BJ (cell line): ENCODE measurements at regions of chr22 and their contacts with region 1.

Region 1: DNA sequence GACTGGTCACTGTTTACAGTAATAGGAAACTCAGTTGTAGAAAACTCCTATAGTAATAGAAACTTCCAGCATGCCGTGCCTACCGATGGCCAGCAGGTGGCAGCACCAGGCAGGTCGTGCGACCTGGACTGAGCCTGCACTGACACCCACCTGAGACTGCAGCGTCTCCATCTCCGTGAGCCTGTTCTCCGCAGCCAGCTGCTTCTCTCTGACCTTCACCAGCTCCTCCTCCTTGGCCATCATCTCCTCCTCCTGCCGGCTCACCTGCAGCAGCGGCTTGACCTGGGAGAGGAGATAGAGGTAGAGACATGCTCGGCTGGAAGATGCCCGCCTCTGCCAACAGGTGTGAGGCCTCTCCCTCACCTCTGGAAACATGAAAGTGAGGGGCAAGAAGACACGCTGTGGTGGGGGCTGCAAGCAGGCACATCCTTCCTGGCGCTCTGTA is 48.5 kb downstream of the APOL1 start:
- DNase-seq: no peak
- H3K4me3 ChIP-seq: no peak overlapping the region
- H3K27me3 ChIP-seq: no peaks in the 10 kb centered on the region
- CTCF ChIP-seq: peak; percentile 90

Region 2: GRCh38 chr22:36277482-36278291 is 23.7 kb before region 1 on chr22:
- CTCF ChIA-PET with region 1: interaction called, 14 read pairs
- POLR2A ChIA-PET with region 1: no interaction called
- DNase-seq: no peak
- H3K4me3 ChIP-seq: no peak overlapping the region
- H3K27me3 ChIP-seq: no peaks in the 10 kb centered on the region
- CTCF ChIP-seq: peak; percentile 86

Region 3: GRCh38 chr22:36311386-36312358 is 10.3 kb after region 1 on chr22:
- CTCF ChIA-PET with region 1: interaction called, 23 read pairs
- POLR2A ChIA-PET with region 1: no interaction called
- DNase-seq: no peak
- H3K4me3 ChIP-seq: no peak overlapping the region
- H3K27me3 ChIP-seq: no peaks in the 10 kb centered on the region
- CTCF ChIP-seq: no peak

Region 4: GRCh38 chr22:36445158-36445668 is 143.8 kb after region 1 on chr22:
- CTCF ChIA-PET with region 1: no interaction called
- POLR2A ChIA-PET with region 1: no interaction called
- DNase-seq: peak; percentile 86
- H3K4me3 ChIP-seq: no peak overlapping the region
- H3K27me3 ChIP-seq: no peaks in the 10 kb centered on the region
- CTCF ChIP-seq: no peak

Region 5: GRCh38 chr22:36461669-36462649 is 160.6 kb after region 1 on chr22:
- CTCF ChIA-PET with region 1: interaction called, 11 read pairs
- POLR2A ChIA-PET with region 1: no interaction called
- DNase-seq: no peak
- H3K4me3 ChIP-seq: no peak overlapping the region
- H3K27me3 ChIP-seq: no peaks in the 10 kb centered on the region
- CTCF ChIP-seq: no peak

Region 6: GRCh38 chr22:36478966-36479365 is 177.6 kb after region 1 on chr22:
- CTCF ChIA-PET with region 1: interaction called, 11 read pairs
- POLR2A ChIA-PET with region 1: no interaction called
- DNase-seq: no peak
- H3K4me3 ChIP-seq: no peak overlapping the region
- H3K27me3 ChIP-seq: no peaks in the 10 kb centered on the region
- CTCF ChIP-seq: no peak